T-cell (primary cell): ENCODE measurements at regions of chr13 and their contacts with region 1.

Region 1: GRCh38 chr13:49828458-49828857 is 36.0 kb upstream of the KPNA3 start:
- DNase-seq: no peak
- ATAC-seq: no peak
- H3K4me3 ChIP-seq: no peak overlapping the region
- H3K4me3 Mint-ChIP-seq: no peak overlapping the region
- H3K27ac ChIP-seq: no peak overlapping the region
- H3K27ac Mint-ChIP-seq: no peak overlapping the region
- H3K4me1 ChIP-seq: peaks cover 0 to 2% of the 10 kb centered on the region in 2 experiments
- H3K4me1 Mint-ChIP-seq: peaks cover 0 to 13% (median 11%) of the 10 kb centered on the region in 3 donors
- H3K27me3 ChIP-seq: peaks cover 0 to 9% of the 10 kb centered on the region in 2 experiments
- H3K27me3 Mint-ChIP-seq: peaks cover 3 to 7% of the 10 kb centered on the region in 2 donors

Region 2: GRCh38 chr13:48942131-48942530 is 886.3 kb before region 1 on chr13:
- CTCF ChIA-PET with region 1: no interaction called
- POLR2A ChIA-PET with region 1: no interaction called
- DNase-seq: no peak
- ATAC-seq: no peak
- H3K4me3 ChIP-seq: no peak overlapping the region
- H3K4me3 Mint-ChIP-seq: no peak overlapping the region
- H3K27ac ChIP-seq: no peak overlapping the region
- H3K27ac Mint-ChIP-seq: no peak overlapping the region
- H3K4me1 ChIP-seq: peaks cover 0 to 6% of the 10 kb centered on the region in 2 experiments
- H3K4me1 Mint-ChIP-seq: peaks cover 14 to 25% (median 18%) of the 10 kb centered on the region in 3 donors
- H3K27me3 ChIP-seq: no peaks in the 10 kb centered on the region
- H3K27me3 Mint-ChIP-seq: peaks cover 2 to 5% of the 10 kb centered on the region in 2 donors

Region 3: GRCh38 chr13:49792550-49793324 is 35.7 kb before region 1 on chr13 and contains the start of gene KPNA3:
- CTCF ChIA-PET with region 1: no interaction called
- POLR2A ChIA-PET with region 1: no interaction called
- DNase-seq: peak; percentile 91 to 99 (median 96)
- ATAC-seq: peak; percentile 89 to 93 (median 90)
- H3K4me3 ChIP-seq: peak within 1 kb of the TSS; percentile 75 to 84
- H3K4me3 Mint-ChIP-seq: peak within 1 kb of the TSS; percentile 82 to 95 (median 94)
- H3K27ac ChIP-seq: peak within 1 kb of the TSS; percentile 77
- H3K27ac Mint-ChIP-seq: peak within 1 kb of the TSS; percentile 89 to 98
- H3K4me1 ChIP-seq: peaks cover 12 to 21% of the 10 kb centered on the region in 2 experiments
- H3K4me1 Mint-ChIP-seq: peaks cover 38% of the 10 kb centered on the region in 3 donors
- H3K27me3 ChIP-seq: peaks cover 0 to 3% of the 10 kb centered on the region in 2 experiments
- H3K27me3 Mint-ChIP-seq: peaks cover 4% of the 10 kb centered on the region in 2 donors
- total RNA-seq, gene KPNA3: 19.6 to 22.3 (median 21.4) TPM

Region 4: GRCh38 chr13:50026788-50027473 is 198.5 kb after region 1 on chr13:
- CTCF ChIA-PET with region 1: no interaction called
- POLR2A ChIA-PET with region 1: interaction called in 1 of 2 experiments, 11 read pairs
- DNase-seq: no peak
- ATAC-seq: no peak
- H3K4me3 ChIP-seq: no peak overlapping the region
- H3K4me3 Mint-ChIP-seq: no peak overlapping the region
- H3K27ac ChIP-seq: no peak overlapping the region
- H3K27ac Mint-ChIP-seq: no peak overlapping the region
- H3K4me1 ChIP-seq: peaks cover 0 to 2% of the 10 kb centered on the region in 2 experiments
- H3K4me1 Mint-ChIP-seq: peaks cover 0 to 8% (median 0%) of the 10 kb centered on the region in 3 donors
- H3K27me3 ChIP-seq: no peaks in the 10 kb centered on the region
- H3K27me3 Mint-ChIP-seq: no peaks in the 10 kb centered on the region

Region 5: GRCh38 chr13:50873467-50873866 is 1045.0 kb after region 1 on chr13:
- CTCF ChIA-PET with region 1: no interaction called
- POLR2A ChIA-PET with region 1: interaction called in 1 of 2 experiments, 11 read pairs
- DNase-seq: no peak
- ATAC-seq: no peak
- H3K4me3 ChIP-seq: no peak overlapping the region
- H3K4me3 Mint-ChIP-seq: no peak overlapping the region
- H3K27ac ChIP-seq: no peak overlapping the region
- H3K27ac Mint-ChIP-seq: no peak overlapping the region
- H3K4me1 ChIP-seq: no peaks in the 10 kb centered on the region
- H3K4me1 Mint-ChIP-seq: peaks cover 0 to 7% (median 0%) of the 10 kb centered on the region in 3 donors
- H3K27me3 ChIP-seq: no peaks in the 10 kb centered on the region
- H3K27me3 Mint-ChIP-seq: peaks cover 0 to 3% of the 10 kb centered on the region in 2 donors